ENCODE measurements at regions of chr13 and their contacts with region 1.

Region 1: DNA sequence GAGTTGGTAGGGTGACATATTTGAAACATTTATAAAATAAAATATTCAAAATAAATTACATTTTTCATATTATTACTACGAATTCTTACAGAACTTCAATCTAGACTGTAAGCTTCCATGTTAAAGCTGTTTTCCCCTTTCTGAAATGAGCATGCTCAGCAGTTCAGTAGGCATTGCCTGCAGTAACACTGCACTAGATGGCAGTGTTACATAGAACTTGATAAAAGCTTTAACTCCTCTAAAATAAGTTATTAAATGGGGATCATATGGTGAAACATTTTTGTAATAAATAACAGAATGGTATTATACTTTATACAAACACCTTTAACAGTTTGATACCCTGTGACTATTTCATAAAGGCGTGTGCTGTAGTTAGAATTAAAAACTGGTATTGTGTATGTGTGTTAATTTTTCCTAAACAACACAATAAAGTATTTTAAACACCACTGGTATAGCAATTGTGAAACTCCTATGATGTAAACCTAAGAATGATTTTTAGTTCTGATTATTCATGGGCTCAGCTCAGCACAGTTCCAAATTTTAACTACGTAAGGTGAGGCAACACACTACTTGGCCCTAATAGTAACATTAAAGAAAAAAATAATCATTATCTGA is 11.6 kb upstream of the GPR18 start:
- DNase-seq: peak in 2 of 5 donors; percentile 52 to 53
- H3K4me3 ChIP-seq: no peak overlapping the region
- H3K4me3 Mint-ChIP-seq: peak overlapping the region in 1 of 7 donors; percentile 18
- H3K27ac ChIP-seq: no peak overlapping the region
- H3K27ac Mint-ChIP-seq: peak overlapping the region in 7 of 8 donors; percentile 50 to 99 (median 82)
- H3K4me1 ChIP-seq: peaks cover 56% of the 10 kb centered on the region
- H3K4me1 Mint-ChIP-seq: peaks cover 65 to 74% (median 72%) of the 10 kb centered on the region in 3 donors
- H3K27me3 ChIP-seq: no peaks in the 10 kb centered on the region
- H3K27me3 Mint-ChIP-seq: no peaks in the 10 kb centered on the region

Region 2: GRCh38 chr13:99176309-99177276 is 93.1 kb before region 1 on chr13:
- CTCF ChIA-PET with region 1: interaction called, 276 read pairs
- POLR2A ChIA-PET with region 1: interaction called, 6 read pairs
- DNase-seq: peak; percentile 69 to 83 (median 72)
- H3K4me3 ChIP-seq: peak overlapping the region; percentile 49
- H3K4me3 Mint-ChIP-seq: peak overlapping the region; percentile 12 to 86 (median 77)
- H3K27ac ChIP-seq: no peak overlapping the region
- H3K27ac Mint-ChIP-seq: peak overlapping the region in 7 of 8 donors; percentile 4 to 94 (median 53)
- H3K4me1 ChIP-seq: peaks cover 33% of the 10 kb centered on the region
- H3K4me1 Mint-ChIP-seq: peaks cover 39 to 49% (median 42%) of the 10 kb centered on the region in 3 donors
- H3K27me3 ChIP-seq: no peaks in the 10 kb centered on the region
- H3K27me3 Mint-ChIP-seq: peaks cover 0 to 2% of the 10 kb centered on the region in 2 donors

Region 3: DNA sequence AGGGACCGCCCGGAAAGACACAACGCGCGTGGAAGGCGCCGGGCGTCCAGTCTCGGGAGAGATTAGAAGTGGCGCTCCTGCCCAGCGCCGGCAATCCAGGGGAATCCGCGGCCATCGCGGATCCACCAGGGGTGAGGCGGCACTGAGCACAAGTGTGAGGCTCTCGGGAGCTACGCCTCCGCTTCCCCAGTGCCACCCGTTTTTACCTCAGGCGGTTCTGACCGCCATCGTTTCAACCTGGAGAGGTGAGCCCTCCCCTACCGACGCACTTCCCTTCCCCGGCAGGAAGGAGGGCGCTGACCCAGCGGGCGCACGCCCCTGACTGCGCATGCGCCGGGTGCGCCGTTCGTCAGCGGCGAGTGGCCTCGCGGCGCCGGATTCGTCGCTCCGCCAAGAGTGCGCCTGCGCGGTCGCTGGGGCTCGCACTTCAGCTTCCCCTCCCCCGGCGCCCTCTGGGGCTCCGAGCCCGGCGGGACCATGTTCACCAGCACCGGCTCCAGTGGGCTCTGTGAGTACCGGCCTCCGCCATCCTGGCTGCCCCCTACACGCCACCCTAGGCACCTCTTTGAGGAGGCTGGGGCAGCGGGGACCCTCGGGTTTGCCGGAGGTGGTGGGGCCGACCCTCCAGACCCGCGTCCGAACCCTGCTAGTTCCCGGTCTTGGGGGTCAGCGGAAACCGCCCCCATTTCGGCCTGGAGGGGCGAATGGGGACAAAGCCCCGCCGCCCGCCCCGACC is 69.1 kb before region 1 on chr13 and contains the start of gene UBAC2:
- CTCF ChIA-PET with region 1: interaction called, 223 read pairs
- POLR2A ChIA-PET with region 1: interaction called, 14 read pairs
- DNase-seq: peak; percentile 95 to 99 (median 98)
- H3K4me3 ChIP-seq: peak within 1 kb of the TSS; percentile 84
- H3K4me3 Mint-ChIP-seq: peak within 1 kb of the TSS; percentile 89 to 98 (median 95)
- H3K27ac ChIP-seq: peak within 1 kb of the TSS; percentile 95
- H3K27ac Mint-ChIP-seq: peak within 1 kb of the TSS; percentile 80 to 100 (median 98)
- H3K4me1 ChIP-seq: peaks cover 46% of the 10 kb centered on the region
- H3K4me1 Mint-ChIP-seq: peaks cover 54 to 71% (median 66%) of the 10 kb centered on the region in 3 donors
- H3K27me3 ChIP-seq: no peaks in the 10 kb centered on the region
- H3K27me3 Mint-ChIP-seq: peaks cover 0 to 4% of the 10 kb centered on the region in 2 donors
- total RNA-seq, gene UBAC2: 62.3 to 63.7 TPM

Region 4: GRCh38 chr13:99307648-99308339 is 38.1 kb after region 1 on chr13:
- CTCF ChIA-PET with region 1: interaction called, 94 read pairs
- POLR2A ChIA-PET with region 1: interaction called, 4 read pairs
- DNase-seq: peak in 2 of 5 donors; percentile 33 to 76
- H3K4me3 ChIP-seq: peak overlapping the region; percentile 50
- H3K4me3 Mint-ChIP-seq: peak overlapping the region; percentile 88 to 95 (median 94)
- H3K27ac ChIP-seq: peak overlapping the region; percentile 71
- H3K27ac Mint-ChIP-seq: peak overlapping the region; percentile 89 to 98 (median 94)
- H3K4me1 ChIP-seq: peaks cover 77% of the 10 kb centered on the region
- H3K4me1 Mint-ChIP-seq: peaks cover 75 to 85% (median 84%) of the 10 kb centered on the region in 3 donors
- H3K27me3 ChIP-seq: no peaks in the 10 kb centered on the region
- H3K27me3 Mint-ChIP-seq: no peaks in the 10 kb centered on the region

Region 5: GRCh38 chr13:99356158-99357091 is 86.7 kb after region 1 on chr13:
- CTCF ChIA-PET with region 1: interaction called, 44 read pairs
- POLR2A ChIA-PET with region 1: interaction called, 11 read pairs
- DNase-seq: peak in 4 of 5 donors; percentile 55 to 92 (median 88)
- H3K4me3 ChIP-seq: peak overlapping the region; percentile 43
- H3K4me3 Mint-ChIP-seq: peak overlapping the region; percentile 2 to 79 (median 72)
- H3K27ac ChIP-seq: peak overlapping the region; percentile 96
- H3K27ac Mint-ChIP-seq: peak overlapping the region; percentile 96 to 100 (median 99)
- H3K4me1 ChIP-seq: peaks cover 97% of the 10 kb centered on the region
- H3K4me1 Mint-ChIP-seq: peaks cover 97 to 100% (median 100%) of the 10 kb centered on the region in 3 donors
- H3K27me3 ChIP-seq: no peaks in the 10 kb centered on the region
- H3K27me3 Mint-ChIP-seq: no peaks in the 10 kb centered on the region

Region 6: GRCh38 chr13:99386911-99387788 is 117.4 kb after region 1 on chr13:
- CTCF ChIA-PET with region 1: interaction called, 67 read pairs
- POLR2A ChIA-PET with region 1: no interaction called
- DNase-seq: peak; percentile 69 to 87 (median 75)
- H3K4me3 ChIP-seq: no peak overlapping the region
- H3K4me3 Mint-ChIP-seq: peak overlapping the region in 5 of 7 donors; percentile 24 to 46 (median 33)
- H3K27ac ChIP-seq: no peak overlapping the region
- H3K27ac Mint-ChIP-seq: peak overlapping the region; percentile 81 to 95 (median 91)
- H3K4me1 ChIP-seq: peaks cover 66% of the 10 kb centered on the region
- H3K4me1 Mint-ChIP-seq: peaks cover 54 to 71% (median 56%) of the 10 kb centered on the region in 3 donors
- H3K27me3 ChIP-seq: no peaks in the 10 kb centered on the region
- H3K27me3 Mint-ChIP-seq: peaks cover 0 to 2% of the 10 kb centered on the region in 2 donors

Region 7: GRCh38 chr13:99436686-99437416 is 167.1 kb after region 1 on chr13:
- CTCF ChIA-PET with region 1: interaction called, 260 read pairs
- POLR2A ChIA-PET with region 1: interaction called, 12 read pairs
- DNase-seq: peak; percentile 91 to 96 (median 93)
- H3K4me3 ChIP-seq: peak overlapping the region; percentile 40
- H3K4me3 Mint-ChIP-seq: peak overlapping the region; percentile 29 to 76 (median 66)
- H3K27ac ChIP-seq: no peak overlapping the region
- H3K27ac Mint-ChIP-seq: peak overlapping the region; percentile 48 to 96 (median 86)
- H3K4me1 ChIP-seq: peaks cover 53% of the 10 kb centered on the region
- H3K4me1 Mint-ChIP-seq: peaks cover 55 to 62% (median 59%) of the 10 kb centered on the region in 3 donors
- H3K27me3 ChIP-seq: no peaks in the 10 kb centered on the region
- H3K27me3 Mint-ChIP-seq: no peaks in the 10 kb centered on the region

Region 8: DNA sequence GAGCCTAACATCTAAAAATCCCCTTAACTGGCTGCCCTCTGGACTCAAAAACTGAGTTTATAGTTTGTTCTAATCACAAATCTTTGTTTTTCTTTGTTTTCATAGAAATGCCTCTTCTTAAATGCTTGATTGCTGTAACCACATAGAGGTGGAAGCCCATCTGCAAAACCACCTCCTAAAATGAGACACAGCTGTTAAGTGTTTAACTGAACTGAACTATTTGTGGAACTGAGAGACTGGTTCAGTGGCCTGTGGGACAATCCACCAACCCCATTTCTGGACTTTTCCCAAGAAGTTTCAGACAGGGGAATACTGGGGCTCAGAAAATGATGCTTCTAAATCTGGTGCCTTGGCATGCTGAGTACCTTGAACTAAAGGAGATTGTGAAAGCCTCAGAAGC is 180.7 kb after region 1 on chr13:
- CTCF ChIA-PET with region 1: no interaction called
- POLR2A ChIA-PET with region 1: no interaction called
- DNase-seq: no peak
- H3K4me3 ChIP-seq: no peak overlapping the region
- H3K4me3 Mint-ChIP-seq: no peak overlapping the region
- H3K27ac ChIP-seq: no peak overlapping the region
- H3K27ac Mint-ChIP-seq: no peak overlapping the region
- H3K4me1 ChIP-seq: no peaks in the 10 kb centered on the region
- H3K4me1 Mint-ChIP-seq: no peaks in the 10 kb centered on the region
- H3K27me3 ChIP-seq: no peaks in the 10 kb centered on the region
- H3K27me3 Mint-ChIP-seq: peaks cover 14 to 42% of the 10 kb centered on the region in 2 donors

Measured in CD8-positive, alpha-beta memory T cell (primary cell).